ENCODE measurements at regions of chr18 and their contacts with region 1.

Region 1: GRCh38 chr18:48345596-48345995 is 63.6 kb downstream of the ZBTB7C start:
- DNase-seq: peak in 1 of 2 donors; percentile 57
- ATAC-seq: peak in 3 of 4 donors; percentile 50 to 70 (median 68)
- H3K4me3 ChIP-seq: no peak overlapping the region
- H3K27ac ChIP-seq: no peak overlapping the region
- H3K4me1 ChIP-seq: no peaks in the 10 kb centered on the region
- H3K27me3 ChIP-seq: peaks cover 0 to 1% (median 0%) of the 10 kb centered on the region in 3 donors
- CTCF ChIP-seq: peak; percentile 51

Region 2: GRCh38 chr18:48030616-48031480 is 314.7 kb before region 1 on chr18:
- intact Hi-C with region 1: loop called in 1 of 2 experiments (anchors 2 kb)
- DNase-seq: no peak
- ATAC-seq: peak; percentile 72 to 90 (median 80)
- H3K4me3 ChIP-seq: no peak overlapping the region
- H3K27ac ChIP-seq: no peak overlapping the region
- H3K4me1 ChIP-seq: peaks cover 3% of the 10 kb centered on the region
- H3K27me3 ChIP-seq: no peaks in the 10 kb centered on the region
- CTCF ChIP-seq: peak; percentile 75

Region 3: GRCh38 chr18:48230467-48231113 is 115.0 kb before region 1 on chr18:
- intact Hi-C with region 1: loop called (anchors 2 to 5 kb)
- DNase-seq: peak; percentile 76 to 84
- ATAC-seq: peak; percentile 92 to 98 (median 97)
- H3K4me3 ChIP-seq: no peak overlapping the region
- H3K27ac ChIP-seq: no peak overlapping the region
- H3K4me1 ChIP-seq: no peaks in the 10 kb centered on the region
- H3K27me3 ChIP-seq: peaks cover 0 to 4% (median 0%) of the 10 kb centered on the region in 3 donors
- CTCF ChIP-seq: peak; percentile 69

Measured in psoas muscle (tissue), 8 donors.